Endothelial cell of umbilical vein (primary cell): ENCODE measurements at regions of chr12 and their contacts with region 1.

Region 1: DNA sequence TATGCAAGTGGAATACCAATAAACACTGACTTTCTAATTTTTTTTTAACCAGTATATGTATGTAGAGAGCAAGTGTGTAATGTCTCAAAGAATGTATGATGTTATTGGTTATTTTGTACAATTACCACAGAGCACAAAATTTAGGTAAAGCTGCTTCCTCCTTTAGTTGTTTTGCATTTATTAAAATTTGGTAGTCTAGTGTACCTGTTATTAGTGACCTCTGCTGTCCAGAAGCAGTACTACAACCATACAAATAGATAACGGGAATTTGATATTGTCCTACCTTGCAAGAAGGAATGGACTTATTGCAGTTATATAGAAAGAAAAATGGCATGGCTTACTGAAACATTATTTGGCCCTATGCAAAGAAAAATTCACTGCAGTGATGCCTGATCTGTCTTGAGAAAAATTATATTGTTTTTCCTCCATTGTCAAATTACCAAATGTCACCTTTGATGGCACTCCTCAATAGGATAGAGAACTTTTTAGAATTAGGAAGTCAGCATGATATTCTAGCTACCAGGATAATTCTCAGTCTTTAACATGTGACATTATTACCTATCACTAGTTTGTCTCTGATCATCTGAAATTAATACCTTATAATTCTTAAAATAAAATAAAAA is 153.9 kb upstream of the RMST start:
- DNase-seq: peak; percentile 77
- H3K4me3 ChIP-seq: no peak overlapping the region
- H3K27ac ChIP-seq: no peak overlapping the region
- H3K4me1 ChIP-seq: no peaks in the 10 kb centered on the region
- H3K27me3 ChIP-seq: peaks cover 0 to 1% of the 10 kb centered on the region in 2 experiments
- CTCF ChIP-seq: peak; percentile 37 to 50
- POLR2A ChIP-seq: no peak

Region 2: DNA sequence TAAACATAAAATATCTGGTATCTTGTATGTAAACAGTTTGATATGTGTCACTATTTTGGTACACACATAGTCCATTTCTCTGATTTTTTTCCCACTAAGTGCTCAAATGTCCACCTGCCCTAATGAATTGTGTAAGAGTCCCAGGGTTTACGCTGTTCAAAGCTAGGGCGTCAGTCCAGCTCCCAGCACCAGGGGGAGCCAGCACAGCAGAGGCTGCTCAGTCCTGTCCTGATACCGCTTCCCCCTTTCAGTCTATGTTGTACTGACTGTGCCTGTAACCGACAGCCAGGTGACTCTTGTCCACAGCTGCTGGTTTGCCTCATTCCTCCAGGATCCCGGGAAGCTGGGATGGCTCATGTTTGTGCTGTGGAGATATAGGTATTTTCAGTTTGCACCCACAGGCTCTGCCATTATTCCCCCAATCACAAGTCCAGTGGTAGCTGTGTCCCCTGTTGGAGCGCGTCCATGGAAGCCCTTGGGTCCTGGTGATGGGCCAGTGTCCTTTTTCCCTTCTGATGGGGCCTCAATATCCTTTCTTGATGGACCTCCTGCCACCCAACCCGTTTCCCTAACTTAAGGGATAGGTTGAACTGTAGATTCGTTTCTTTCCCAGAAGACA is 159.6 kb before region 1 on chr12:
- CTCF ChIA-PET with region 1: interaction called, 3 read pairs
- POLR2A ChIA-PET with region 1: no interaction called
- dilution Hi-C with region 1: no loop called
- intact Hi-C with region 1: loop called (anchors 1 kb)
- DNase-seq: peak; percentile 31
- H3K4me3 ChIP-seq: no peak overlapping the region
- H3K27ac ChIP-seq: no peak overlapping the region
- H3K4me1 ChIP-seq: peaks cover 20% of the 10 kb centered on the region
- H3K27me3 ChIP-seq: no peaks in the 10 kb centered on the region
- CTCF ChIP-seq: peak; percentile 65 to 75
- POLR2A ChIP-seq: no peak

Region 3: GRCh38 chr12:97335115-97335514 is 26.4 kb after region 1 on chr12:
- CTCF ChIA-PET with region 1: no interaction called
- POLR2A ChIA-PET with region 1: no interaction called
- dilution Hi-C with region 1: no loop called
- intact Hi-C with region 1: no loop called
- DNase-seq: no peak
- H3K4me3 ChIP-seq: no peak overlapping the region
- H3K27ac ChIP-seq: no peak overlapping the region
- H3K4me1 ChIP-seq: no peaks in the 10 kb centered on the region
- H3K27me3 ChIP-seq: no peaks in the 10 kb centered on the region
- CTCF ChIP-seq: no peak
- POLR2A ChIP-seq: no peak